Sciatic nerve (tissue), 2 donors: ENCODE measurements at regions of chr7 and their contacts with region 1.

Region 1: GRCh38 chr7:139645572-139646523 is 122.4 kb downstream of the CLEC2L start:
- DNase-seq: peak; percentile 91
- ATAC-seq: peak; percentile 74

Region 2: GRCh38 chr7:139570119-139570518 is 75.7 kb before region 1 on chr7:
- intact Hi-C with region 1: no loop called
- DNase-seq: no peak
- ATAC-seq: peak; percentile 64

Region 3: DNA sequence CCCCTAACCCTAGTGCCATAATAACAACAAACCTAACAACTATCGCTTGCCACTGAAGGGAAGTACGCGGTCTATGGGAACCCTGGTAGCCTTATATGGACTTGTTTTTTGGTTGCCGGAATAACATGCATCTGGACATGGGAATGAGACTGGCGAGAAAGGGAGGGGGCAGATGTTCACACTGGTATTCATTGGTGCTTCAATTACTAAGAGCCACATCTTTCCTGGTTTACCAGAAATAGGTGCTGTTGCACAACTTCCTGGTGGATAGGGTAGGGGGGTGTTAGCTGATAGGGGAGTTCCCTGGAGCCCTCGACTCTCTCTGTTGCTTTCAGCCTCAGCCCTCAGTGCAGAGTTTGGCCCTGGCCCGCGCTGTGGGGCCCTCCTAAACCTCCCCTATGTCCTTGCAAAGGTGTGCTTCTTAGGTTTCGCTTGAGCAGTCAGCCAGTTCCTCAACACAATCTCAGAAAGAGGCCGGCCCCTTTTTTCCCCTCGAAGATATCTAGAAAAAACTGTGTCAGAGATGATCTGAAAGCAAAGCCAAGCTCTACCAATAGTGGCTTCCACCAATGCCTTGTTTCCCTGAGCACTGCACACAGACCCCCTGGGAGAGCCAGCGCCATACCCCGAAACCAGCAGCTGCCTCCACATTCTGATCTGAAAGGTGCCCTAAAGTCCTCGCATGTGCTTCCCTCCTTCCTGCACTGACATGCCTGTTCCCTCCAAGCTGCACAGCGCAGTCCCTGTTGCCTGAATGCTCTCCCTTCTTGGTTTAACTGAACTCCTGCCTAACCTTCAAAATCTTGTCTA is 196.8 kb after region 1 on chr7:
- intact Hi-C with region 1: no loop called
- DNase-seq: peak; percentile 17
- ATAC-seq: no peak

Region 4: DNA sequence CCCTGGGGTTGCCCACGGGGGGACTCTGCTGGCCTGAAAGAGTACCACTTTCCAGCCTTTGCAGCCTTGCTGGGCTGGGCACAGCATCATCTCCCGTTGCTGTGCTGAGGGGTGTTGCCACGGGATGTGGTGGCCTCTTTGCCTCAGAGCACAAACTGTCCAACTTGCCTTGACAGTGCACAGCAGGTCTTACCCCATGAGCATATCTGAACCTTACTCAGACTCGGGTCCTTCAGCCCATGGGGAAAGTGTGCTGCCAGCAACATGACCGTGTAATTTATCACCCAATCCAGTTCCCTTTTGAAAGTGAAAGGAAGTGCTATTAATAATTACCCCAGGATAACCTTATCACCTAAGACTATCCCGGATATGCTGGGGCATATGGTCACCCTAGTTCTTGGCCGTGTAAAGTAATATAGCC is 230.0 kb after region 1 on chr7:
- intact Hi-C with region 1: no loop called
- DNase-seq: no peak
- ATAC-seq: no peak

Region 5: GRCh38 chr7:140003913-140004382 is 358.1 kb after region 1 on chr7:
- intact Hi-C with region 1: loop called (anchors 5 kb)
- DNase-seq: no peak
- ATAC-seq: no peak